Calu3 (cell line): ENCODE measurements at regions of chr4 and their contacts with region 1.

Region 1: DNA sequence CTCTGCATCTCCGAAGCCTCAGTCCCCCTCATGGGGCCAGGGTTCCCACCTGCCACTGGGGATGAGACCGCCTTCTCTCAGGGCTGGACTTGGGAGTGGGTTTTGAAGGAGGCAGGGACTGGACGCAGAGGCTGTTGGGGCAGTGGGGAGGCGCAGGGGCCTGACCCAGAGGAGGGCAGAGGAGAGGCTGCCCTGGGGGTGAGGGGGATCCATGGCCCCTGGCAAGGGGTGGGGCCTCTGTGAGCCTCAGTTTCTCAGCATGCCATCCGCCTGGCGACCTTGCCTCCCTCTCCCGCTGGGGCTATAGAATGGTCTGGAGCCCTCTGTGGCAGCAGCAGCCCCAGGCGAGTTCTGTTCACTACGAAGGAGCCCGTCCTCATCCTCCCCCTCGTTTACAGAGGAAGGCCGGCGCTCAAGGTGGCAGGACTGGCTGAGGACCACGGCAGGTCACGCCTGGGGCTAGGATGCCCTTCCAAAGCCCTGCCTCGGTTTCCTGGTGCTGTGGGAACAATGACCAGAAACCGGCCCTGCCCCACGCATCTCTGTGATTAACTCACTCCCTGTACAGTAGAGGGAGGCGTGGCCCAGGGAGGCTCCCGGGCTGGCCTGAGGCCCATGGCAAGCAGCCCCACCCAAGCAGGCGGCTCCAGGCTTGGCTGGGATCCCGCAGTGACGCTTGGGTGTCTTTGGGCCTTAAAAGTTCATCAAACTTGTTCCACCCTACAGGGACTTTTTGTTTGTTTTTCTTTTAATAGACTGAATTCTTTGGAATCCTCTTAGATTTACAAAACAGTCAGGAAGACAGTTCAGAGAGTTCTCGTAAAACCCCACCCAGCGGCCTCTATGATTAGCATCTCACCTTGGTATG is 16.0 kb upstream of the SH3TC1 start:
- DNase-seq: peak; percentile 85
- H3K4me3 Mint-ChIP-seq: no peak overlapping the region
- H3K27ac Mint-ChIP-seq: no peak overlapping the region
- H3K4me1 Mint-ChIP-seq: peaks cover 17% of the 10 kb centered on the region
- H3K27me3 Mint-ChIP-seq: no peaks in the 10 kb centered on the region
- CTCF ChIP-seq: no peak

Region 2: DNA sequence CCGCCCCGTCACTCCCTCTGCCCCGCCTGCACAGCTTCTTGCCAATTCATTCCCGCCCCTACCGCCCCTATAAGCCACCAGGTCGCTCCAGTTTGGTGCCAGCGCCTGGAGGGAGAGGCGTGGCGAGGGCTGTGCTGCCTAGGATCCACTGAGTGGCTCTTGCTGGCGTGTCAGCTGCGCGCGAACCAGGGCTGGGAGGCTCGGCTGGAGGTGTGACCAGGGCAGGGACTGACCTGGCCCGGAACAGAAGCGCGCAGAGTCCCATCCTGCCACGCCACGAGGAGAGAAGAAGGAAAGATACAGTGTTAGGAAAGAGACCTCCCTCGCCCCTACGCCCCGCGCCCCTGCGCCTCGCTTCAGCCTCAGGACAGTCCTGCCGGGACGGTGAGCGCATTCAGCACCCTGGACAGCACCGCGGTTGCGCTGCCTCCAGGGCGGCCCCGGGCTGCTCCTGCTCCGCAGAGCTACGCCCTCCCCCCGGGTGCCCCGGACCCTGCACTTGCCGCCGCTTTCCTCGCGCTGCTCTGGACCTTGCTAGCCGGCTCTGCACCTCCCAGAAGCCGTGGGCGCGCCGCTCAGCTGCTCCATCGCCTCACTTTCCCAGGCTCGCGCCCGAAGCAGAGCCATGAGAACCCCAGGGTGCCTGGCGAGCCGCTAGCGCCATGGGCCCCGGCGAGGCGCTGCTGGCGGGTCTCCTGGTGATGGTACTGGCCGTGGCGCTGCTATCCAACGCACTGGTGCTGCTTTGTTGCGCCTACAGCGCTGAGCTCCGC is 397.4 kb after region 1 on chr4 and contains the start of gene GPR78:
- CTCF ChIA-PET with region 1: no interaction called
- intact Hi-C with region 1: loop called (anchors 10 kb)
- DNase-seq: peak; percentile 68
- H3K4me3 Mint-ChIP-seq: no peak within 1 kb of the TSS
- H3K27ac Mint-ChIP-seq: no peak within 1 kb of the TSS
- H3K4me1 Mint-ChIP-seq: no peaks in the 10 kb centered on the region
- H3K27me3 Mint-ChIP-seq: peaks cover 86% of the 10 kb centered on the region
- CTCF ChIP-seq: no peak
- total RNA-seq, gene GPR78: 0.20 TPM in 1 of 2 replicates, not detected in the other